ENCODE measurements at regions of chr1 and their contacts with region 1.

Region 1: DNA sequence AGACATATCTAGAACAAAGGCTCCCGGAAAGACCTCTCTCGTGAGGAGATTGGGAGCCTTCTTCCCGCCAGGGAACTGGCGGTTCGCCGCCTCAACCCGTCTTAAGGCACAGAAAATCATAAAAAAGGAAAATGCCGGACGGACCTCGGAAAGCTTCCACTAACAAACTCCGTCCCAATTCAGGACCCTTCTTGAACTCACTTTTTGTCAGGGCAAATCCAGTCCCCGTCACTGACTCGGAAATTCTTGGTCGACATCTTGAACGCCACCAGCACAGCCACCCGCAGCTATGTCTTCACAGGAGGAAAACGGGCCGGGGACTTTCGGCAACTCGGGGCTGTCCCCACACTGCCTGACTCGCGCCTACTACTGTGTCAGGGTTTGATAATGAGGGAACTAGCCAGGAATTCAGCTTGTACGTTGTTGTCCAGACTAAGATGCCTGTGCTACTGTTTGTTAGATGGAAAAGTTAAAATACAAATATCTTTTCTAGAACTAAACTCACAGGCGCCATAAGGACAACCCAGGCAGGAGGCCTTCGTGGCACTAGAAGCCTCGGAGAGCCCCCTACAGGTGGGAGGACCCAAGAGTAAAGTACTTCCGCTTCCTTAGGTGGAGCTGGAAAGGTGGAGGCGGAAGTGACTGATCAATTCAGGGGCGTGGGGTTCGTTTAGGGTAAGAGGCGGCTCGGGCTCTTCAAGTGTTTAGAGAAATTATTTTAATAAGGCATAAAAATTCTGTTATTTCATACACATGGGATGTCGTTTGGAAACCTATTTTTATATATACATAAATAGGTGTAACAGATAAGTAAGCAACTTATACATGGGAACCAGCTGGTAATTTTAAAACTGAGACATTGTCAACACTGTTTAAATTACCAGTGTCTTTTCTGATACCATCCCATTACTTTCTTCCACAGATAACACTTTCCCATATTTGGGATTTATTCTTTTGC is at the start of gene ZRANB2:
- DNase-seq: peak; percentile 97
- H3K4me3 Mint-ChIP-seq: peak within 1 kb of the TSS; percentile 100
- H3K27ac Mint-ChIP-seq: peak within 1 kb of the TSS; percentile 99
- H3K4me1 Mint-ChIP-seq: peaks cover 13% of the 10 kb centered on the region
- H3K27me3 Mint-ChIP-seq: peaks cover 14% of the 10 kb centered on the region
- total RNA-seq, gene ZRANB2: 150 and 154 TPM in 2 replicates

Region 2: DNA sequence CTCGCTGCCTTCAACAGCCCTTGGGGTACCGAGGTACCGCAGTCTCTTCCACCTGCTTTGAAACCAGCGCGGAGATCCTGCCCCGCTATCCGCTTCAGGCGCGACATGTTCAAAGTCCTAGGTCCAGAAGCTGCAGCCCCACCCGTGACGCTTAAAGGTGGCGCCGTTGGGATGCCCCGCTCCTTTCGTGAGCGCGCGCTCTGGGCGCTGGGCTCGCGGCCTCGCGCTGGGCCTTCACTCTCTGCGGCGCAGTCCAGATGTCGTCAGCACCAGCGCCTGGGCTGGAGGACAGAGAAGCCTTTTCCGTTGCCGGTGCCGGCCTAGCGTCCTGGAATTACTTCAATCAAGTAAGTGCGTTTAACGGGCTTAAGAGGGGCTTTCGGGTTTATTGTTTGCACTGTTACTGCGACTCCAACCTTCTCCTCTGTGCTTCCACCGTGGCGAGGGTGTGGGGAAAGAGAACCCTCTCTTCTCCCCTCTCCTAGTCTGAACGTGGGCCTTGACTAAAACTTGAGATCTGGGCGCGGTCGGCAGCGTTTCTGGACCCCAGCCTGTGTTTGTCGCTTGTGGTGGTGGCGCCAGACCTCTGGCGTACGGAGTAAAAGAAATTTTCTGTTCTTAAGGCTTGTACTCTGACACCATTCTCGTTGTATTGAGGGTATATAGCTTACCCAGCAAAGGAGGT is 875.4 kb before region 1 on chr1 and contains the start of gene LRRC40:
- intact Hi-C with region 1: loop called (anchors 1 kb)
- DNase-seq: peak; percentile 99
- H3K4me3 Mint-ChIP-seq: peak within 1 kb of the TSS; percentile 95
- H3K27ac Mint-ChIP-seq: peak within 1 kb of the TSS; percentile 99
- H3K4me1 Mint-ChIP-seq: peaks cover 49% of the 10 kb centered on the region
- H3K27me3 Mint-ChIP-seq: no peaks in the 10 kb centered on the region
- total RNA-seq, gene LRRC40: 23.3 and 25.3 TPM in 2 replicates

Region 3: DNA sequence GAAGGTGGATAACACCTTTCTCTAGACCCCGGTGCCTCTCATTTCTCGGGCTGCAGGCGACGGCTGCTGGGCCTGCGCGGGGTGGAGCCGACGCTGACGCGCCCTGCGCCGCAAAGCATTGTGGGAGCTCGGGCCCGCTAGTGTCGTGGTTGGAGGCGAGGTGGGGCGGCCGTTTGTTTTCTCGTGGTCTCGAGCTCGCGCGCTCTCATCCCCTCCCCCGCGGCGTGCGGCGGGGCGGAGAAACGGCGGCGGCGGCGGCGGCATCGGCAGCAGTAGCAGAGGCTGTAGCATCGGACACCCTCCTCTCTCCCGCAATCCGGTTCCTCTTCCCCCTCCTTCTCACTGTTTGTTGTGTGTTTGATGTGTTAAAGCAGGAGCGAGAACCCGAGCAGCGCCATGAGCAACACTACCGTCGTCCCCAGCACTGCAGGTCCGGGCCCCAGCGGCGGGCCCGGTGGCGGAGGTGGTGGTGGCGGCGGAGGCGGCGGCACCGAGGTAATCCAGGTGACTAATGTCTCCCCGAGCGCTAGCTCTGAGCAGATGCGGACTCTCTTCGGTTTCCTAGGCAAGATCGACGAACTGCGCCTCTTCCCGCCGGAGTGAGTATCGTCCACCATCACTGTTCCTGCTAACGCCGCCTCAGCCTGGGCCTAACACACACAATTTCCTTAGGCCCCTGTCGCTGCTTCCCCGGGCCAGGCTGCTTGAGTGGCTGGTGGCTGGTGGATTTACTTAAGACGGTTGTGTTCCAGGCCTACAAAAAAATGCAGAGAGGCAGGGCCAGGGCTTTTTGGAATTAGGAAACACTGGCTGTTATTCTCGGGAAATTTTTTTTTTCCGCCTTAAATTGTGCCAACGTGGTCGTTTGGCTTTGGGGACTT is 859.5 kb before region 1 on chr1 and contains the start of gene SRSF11:
- intact Hi-C with region 1: loop called (anchors 5 kb)
- DNase-seq: peak; percentile 99
- H3K4me3 Mint-ChIP-seq: peak within 1 kb of the TSS; percentile 96
- H3K27ac Mint-ChIP-seq: peak within 1 kb of the TSS; percentile 99
- H3K4me1 Mint-ChIP-seq: peaks cover 33% of the 10 kb centered on the region
- H3K27me3 Mint-ChIP-seq: no peaks in the 10 kb centered on the region
- total RNA-seq, gene SRSF11: 187 and 195 TPM in 2 replicates

Region 4: DNA sequence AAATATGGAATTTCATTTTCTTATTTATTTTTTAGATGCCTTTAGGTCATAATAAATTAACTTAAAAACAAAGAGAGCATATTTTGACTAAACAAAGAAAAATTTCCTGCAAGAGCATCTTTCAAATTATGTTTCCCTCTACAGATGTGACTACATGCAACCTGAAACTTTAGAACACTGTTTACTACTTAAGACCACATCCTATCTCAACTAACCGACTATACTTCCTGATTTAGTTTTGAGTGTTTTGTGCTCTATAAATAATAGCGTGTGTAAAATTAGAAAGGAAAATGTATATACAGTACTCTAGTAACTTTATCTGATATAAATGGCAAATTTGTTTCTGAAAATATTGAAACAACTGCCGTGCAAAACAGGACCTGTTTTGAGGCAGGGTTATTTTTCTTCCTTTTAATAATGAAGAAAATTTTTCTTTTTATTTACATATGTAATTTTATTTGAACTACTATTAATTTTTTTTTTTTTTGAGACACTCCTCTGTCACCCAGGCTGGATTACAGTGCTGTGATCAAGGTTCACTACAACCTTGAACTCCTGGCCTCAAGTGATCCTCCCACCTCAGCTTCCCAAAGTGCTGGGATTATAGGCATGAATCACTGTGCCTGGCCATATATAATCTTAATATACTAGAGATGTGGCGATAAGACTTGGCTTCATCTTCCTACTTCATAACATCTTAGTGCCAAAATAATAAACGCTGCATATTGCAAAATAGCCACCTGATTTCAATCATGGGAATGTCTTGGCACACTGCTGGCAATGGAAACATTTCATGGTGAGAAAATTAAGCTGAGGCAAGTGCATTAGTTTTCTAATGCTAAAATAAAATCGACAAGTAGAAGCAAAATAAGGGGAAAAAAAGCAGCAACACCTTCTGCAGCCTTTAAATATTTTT is 12.4 kb before region 1 on chr1:
- intact Hi-C with region 1: loop called (anchors 2 kb)
- DNase-seq: no peak
- H3K4me3 Mint-ChIP-seq: peak overlapping the region; percentile 62
- H3K27ac Mint-ChIP-seq: peak overlapping the region; percentile 45
- H3K4me1 Mint-ChIP-seq: peaks cover 21% of the 10 kb centered on the region
- H3K27me3 Mint-ChIP-seq: no peaks in the 10 kb centered on the region

Region 5: DNA sequence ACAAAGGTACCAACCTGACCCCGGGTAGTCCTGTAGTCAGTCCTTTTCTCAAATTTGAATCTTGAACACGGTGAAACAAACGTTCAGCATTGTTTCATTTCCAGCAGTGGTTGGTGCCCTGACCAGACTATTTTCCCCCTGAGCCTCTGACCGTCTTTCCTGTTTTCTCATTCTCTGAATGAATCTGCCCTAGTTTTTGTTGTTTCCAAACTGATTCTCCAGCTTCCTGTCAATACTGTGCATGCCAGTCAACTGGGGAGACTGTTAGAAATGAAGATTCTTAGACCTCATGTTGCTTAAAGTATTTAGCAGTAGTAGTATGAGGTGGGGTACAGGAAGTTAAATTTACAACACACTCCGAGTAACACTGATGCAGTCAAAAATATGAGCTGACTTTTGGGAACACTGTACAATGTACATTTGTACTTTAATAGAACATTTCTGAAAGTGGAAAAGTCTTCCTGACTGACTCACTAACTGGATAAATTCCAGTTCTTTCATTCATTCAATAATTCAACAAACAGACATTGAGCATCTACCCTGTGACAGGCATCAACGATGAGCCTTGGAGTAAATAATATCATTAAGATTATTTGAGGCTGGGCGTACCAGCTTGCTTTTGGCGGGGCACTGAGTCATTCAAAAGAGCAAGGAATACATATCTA is 25.8 kb after region 1 on chr1:
- intact Hi-C with region 1: no loop called
- DNase-seq: no peak
- H3K4me3 Mint-ChIP-seq: no peak overlapping the region
- H3K27ac Mint-ChIP-seq: no peak overlapping the region
- H3K4me1 Mint-ChIP-seq: no peaks in the 10 kb centered on the region
- H3K27me3 Mint-ChIP-seq: peaks cover 2% of the 10 kb centered on the region

Region 6: DNA sequence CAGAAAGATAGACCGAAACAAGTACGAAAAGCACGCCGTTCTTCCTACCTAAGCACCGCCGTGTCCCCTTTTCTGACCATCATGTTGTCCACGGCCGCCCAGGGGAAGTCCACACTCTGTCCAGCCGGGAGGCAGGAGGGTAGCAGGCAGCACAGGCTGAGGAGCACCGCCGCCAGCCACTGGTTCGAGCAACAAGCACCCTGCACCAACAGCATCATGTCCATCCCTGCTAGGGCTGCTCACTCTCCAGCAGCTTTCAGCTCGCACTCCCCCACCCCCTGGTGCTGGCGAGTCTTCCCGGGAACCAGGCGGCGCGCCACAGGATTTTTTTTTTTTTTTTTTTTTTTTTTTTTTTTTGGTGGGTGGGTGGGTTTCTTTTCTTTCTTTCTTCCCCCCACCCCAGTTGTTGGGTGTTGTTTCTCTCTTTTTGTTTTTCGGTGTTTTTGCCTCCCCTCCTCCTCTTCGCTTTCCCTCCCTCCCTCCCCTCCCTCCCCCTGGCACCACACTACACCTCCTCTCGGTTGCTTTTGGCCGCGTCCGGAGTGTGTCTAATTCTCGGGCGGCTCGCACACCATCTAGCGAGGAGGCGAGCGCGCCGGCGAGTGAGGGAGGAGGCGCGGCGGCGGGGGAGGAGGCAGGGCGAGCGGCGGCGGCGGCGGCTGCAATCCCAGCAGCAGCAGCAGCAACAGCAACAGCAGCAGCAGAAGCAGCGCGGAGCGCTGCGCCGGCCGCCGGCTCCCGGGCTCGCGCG is 1201.4 kb after region 1 on chr1 and contains the start of gene NEGR1:
- intact Hi-C with region 1: loop called (anchors 10 kb)
- DNase-seq: peak; percentile 88
- H3K4me3 Mint-ChIP-seq: no peak within 1 kb of the TSS
- H3K27ac Mint-ChIP-seq: peak within 1 kb of the TSS; percentile 38
- H3K4me1 Mint-ChIP-seq: peaks cover 5% of the 10 kb centered on the region
- H3K27me3 Mint-ChIP-seq: peaks cover 39% of the 10 kb centered on the region
- total RNA-seq, gene NEGR1: not detected in 2 replicates

Measured in activated CD4-positive, alpha-beta T cell treated with anti-CD3 and anti-CD28 coated beads, Interleukin-2, amount 10 ng/mL, durations not matched to agents 24 days and 14 days (primary cell).